WTC11 (cell line): ENCODE measurements at regions of chr16 and their contacts with region 1.

Region 1: GRCh38 chr16:19980632-19981265 is 92.9 kb downstream of the GPR139 start:
- DNase-seq: peak; percentile 41
- ATAC-seq: peak; percentile 92
- H3K4me3 Mint-ChIP-seq: no peak overlapping the region
- H3K27ac Mint-ChIP-seq: 0 out of 2 replicates have a peak overlapping the region, but pooled peaks have one; percentile 34
- H3K4me1 Mint-ChIP-seq: peaks cover 30% of the 10 kb centered on the region
- H3K27me3 Mint-ChIP-seq: no peaks in the 10 kb centered on the region
- CTCF ChIP-seq: peak; percentile 46

Region 2: GRCh38 chr16:19948186-19949104 is 32.3 kb before region 1 on chr16:
- CTCF ChIA-PET with region 1: interaction called, 16 read pairs
- POLR2A ChIA-PET with region 1: no interaction called
- DNase-seq: peak; percentile 72
- ATAC-seq: peak; percentile 89
- H3K4me3 Mint-ChIP-seq: peak overlapping the region; percentile 13; the same call in 1 of the 2 replicates
- H3K27ac Mint-ChIP-seq: peak overlapping the region; percentile 98
- H3K4me1 Mint-ChIP-seq: peaks cover 49% of the 10 kb centered on the region
- H3K27me3 Mint-ChIP-seq: peaks cover 2% of the 10 kb centered on the region; the same call in 1 of the 2 replicates
- CTCF ChIP-seq: no peak